ENCODE measurements at regions of chr1 and their contacts with region 1.

Region 1: DNA sequence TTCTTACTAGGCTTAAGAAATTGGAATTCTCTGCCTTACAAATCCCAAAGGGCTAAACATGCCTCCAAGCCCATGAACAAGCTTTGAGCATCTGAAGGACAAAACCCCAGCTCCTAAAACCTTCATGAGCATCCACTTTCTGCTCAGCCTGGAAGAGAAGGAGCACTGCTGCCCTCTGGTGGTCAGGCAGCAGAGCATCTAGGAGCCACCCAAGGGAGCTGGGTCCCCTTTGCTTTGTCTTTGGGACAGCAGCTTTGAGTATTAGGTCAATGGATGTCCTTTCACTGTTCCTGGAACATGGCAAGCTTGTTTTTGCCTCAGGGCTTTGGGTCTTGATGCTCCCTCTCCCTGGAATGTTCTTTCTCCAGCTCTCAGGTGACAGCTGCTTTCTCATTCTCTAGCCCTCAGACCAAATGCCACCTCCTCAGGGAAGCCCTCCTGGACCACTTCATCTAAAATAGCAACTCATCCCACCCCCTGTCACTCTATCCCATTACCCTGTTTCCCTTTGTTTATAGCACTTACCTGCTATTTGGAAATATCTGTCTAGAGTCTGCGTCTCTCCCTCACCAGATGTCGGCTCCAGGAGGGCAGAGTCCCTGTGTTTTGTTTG is 25.7 kb downstream of the RAB7B start:
- DNase-seq: no peak
- H3K4me3 ChIP-seq: no peak overlapping the region
- H3K27ac ChIP-seq: no peak overlapping the region
- H3K4me1 ChIP-seq: peaks cover 0 to 19% (median 3%) of the 10 kb centered on the region in 4 donors
- H3K27me3 ChIP-seq: peaks cover 0 to 5% (median 0%) of the 10 kb centered on the region in 4 donors
- CTCF ChIP-seq: peak; percentile 90 to 96 (median 96)
- EP300 ChIP-seq: no peak
- POLR2A ChIP-seq: no peak

Region 2: GRCh38 chr1:205591522-205592351 is 385.8 kb before region 1 on chr1:
- intact Hi-C with region 1: loop called (anchors 5 kb)
- DNase-seq: peak; percentile 98
- H3K4me3 ChIP-seq: peak overlapping the region; percentile 50 to 61 (median 54)
- H3K27ac ChIP-seq: peak overlapping the region in 3 of 4 donors; percentile 40 to 64 (median 44)
- H3K4me1 ChIP-seq: peaks cover 11 to 21% (median 16%) of the 10 kb centered on the region in 4 donors
- H3K27me3 ChIP-seq: no peaks in the 10 kb centered on the region
- CTCF ChIP-seq: peak; percentile 98
- EP300 ChIP-seq: no peak
- POLR2A ChIP-seq: no peak

Region 3: GRCh38 chr1:205791568-205792180 is 185.8 kb before region 1 on chr1:
- intact Hi-C with region 1: loop called (anchors 1 kb)
- DNase-seq: no peak
- H3K4me3 ChIP-seq: no peak overlapping the region
- H3K27ac ChIP-seq: no peak overlapping the region
- H3K4me1 ChIP-seq: peaks cover 0 to 8% (median 4%) of the 10 kb centered on the region in 4 donors
- H3K27me3 ChIP-seq: no peaks in the 10 kb centered on the region
- CTCF ChIP-seq: peak; percentile 73 to 84 (median 82)
- EP300 ChIP-seq: no peak
- POLR2A ChIP-seq: no peak

Region 4: DNA sequence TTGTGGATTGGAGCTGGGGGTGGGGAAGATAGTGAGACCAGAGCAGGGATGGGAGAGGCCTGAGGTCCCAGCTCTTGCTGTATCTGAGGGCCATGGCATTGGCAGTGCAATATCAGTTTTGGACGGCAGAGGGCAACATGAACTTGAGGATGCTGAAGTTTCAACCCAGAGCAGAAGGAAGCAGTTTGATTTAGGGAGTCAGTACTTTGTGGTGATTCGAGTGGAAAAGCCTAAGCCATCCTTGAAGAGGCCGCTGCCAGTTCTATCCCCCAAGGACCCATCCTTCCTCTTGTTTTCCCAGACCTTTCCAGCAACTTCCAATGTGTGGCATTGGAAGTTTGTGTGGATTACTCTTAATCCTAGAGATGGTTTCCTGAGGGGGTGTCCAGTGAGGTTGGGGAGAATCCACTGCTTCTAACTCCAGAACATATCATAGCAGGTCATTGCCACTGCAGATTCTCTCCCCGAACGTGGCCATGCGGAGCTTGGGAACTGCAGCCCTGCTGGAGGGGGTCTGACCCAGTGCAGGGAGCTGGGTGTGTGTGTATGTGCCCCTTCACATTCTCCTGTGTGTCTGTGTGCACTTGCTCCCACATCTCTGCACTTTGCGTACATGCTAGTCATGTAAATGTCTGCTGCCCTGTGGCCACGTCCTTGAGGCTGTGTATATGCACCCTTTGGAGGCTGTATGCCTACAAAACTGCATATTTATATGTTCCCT is 58.3 kb before region 1 on chr1:
- intact Hi-C with region 1: loop called (anchors 2 kb)
- DNase-seq: peak; percentile 95
- H3K4me3 ChIP-seq: no peak overlapping the region
- H3K27ac ChIP-seq: no peak overlapping the region
- H3K4me1 ChIP-seq: peaks cover 5 to 27% (median 17%) of the 10 kb centered on the region in 4 donors
- H3K27me3 ChIP-seq: peaks cover 0 to 14% (median 0%) of the 10 kb centered on the region in 4 donors
- CTCF ChIP-seq: peak; percentile 86 to 97 (median 92)
- EP300 ChIP-seq: no peak
- POLR2A ChIP-seq: no peak

Region 5: GRCh38 chr1:206012086-206012859 is 34.8 kb after region 1 on chr1:
- intact Hi-C with region 1: no loop called
- DNase-seq: no peak
- H3K4me3 ChIP-seq: no peak overlapping the region
- H3K27ac ChIP-seq: no peak overlapping the region
- H3K4me1 ChIP-seq: no peaks in the 10 kb centered on the region
- H3K27me3 ChIP-seq: no peaks in the 10 kb centered on the region
- CTCF ChIP-seq: no peak
- EP300 ChIP-seq: no peak
- POLR2A ChIP-seq: no peak